HepG2 (cell line): ENCODE measurements at regions of chr7 and their contacts with region 1.

Region 1: DNA sequence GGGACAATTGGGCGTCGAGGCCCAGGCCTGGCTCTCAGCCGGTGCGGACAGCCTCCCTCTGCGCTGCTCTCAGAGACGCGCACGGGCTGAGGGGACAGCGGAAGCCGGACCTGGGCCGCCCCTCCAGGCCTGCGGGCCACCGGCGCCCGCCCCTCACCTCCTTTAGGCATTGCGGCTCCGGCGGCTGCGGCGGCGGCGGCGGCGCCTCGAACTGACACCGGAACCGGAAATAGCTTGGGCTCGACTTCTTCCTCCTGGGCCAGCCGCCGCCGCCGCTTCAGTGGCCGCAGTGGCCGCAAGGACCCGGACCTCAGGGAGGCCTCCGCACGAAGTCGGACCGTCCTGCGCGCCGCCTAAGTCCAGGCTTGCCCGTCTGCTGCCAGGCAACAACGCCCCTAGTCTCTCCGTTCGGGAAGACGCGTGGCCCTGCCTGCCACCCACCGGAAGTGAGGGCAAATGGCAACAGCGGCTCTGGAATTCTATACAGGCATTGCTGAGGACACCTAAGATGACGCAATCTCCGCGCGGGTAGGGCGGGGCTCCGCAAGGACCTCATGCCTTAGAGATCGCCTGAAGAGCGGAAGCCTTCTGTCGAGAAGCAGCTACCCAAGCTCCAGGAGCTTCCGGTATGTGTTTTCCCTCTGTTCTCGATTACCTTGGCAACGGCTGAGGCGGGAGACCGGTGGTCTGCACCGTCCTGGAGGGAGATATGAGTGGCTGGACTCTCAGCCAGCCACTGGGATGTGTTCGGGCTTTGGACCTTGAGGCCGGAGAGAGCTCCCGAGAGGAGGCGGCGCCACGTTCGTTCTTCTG is at the starts of genes BUD31 and PDAP1:
- DNase-seq: peak; percentile 91
- ATAC-seq: peak; percentile 90
- H3K4me3 ChIP-seq: peak within 1 kb of the TSS; percentile 80 to 100 (median 93)
- H3K27ac ChIP-seq: peak within 1 kb of the TSS; percentile 98
- H3K4me1 ChIP-seq: peaks cover 41% of the 10 kb centered on the region
- H3K27me3 ChIP-seq: peaks cover 0 to 4% of the 10 kb centered on the region in 2 experiments; a peak in 2 of 5 replicates
- CTCF ChIP-seq: peak; percentile 37
- EP300 ChIP-seq: peak; percentile 41 to 54; a peak in 1 of 4 replicates
- POLR2A ChIP-seq: peak; percentile 91 to 95
- RAD21 ChIP-seq: peak; percentile 54; the same call in 1 of the 2 replicates
- total RNA-seq, gene BUD31: 79.1 and 101 TPM in 2 replicates
- total RNA-seq, gene PDAP1: 95.1 and 100 TPM in 2 replicates

Region 2: GRCh38 chr7:99374103-99375064 is 34.2 kb before region 1 on chr7 and contains the start of gene ARPC1B:
- CTCF ChIA-PET with region 1: no interaction called
- POLR2A ChIA-PET with region 1: interaction called, 29 read pairs
- in situ Hi-C with region 1: no loop called
- intact Hi-C with region 1: loop called (anchors 5 kb)
- DNase-seq: peak; percentile 57
- ATAC-seq: peak; percentile 78
- H3K4me3 ChIP-seq: peak within 1 kb of the TSS; percentile 87 to 99 (median 95)
- H3K27ac ChIP-seq: peak within 1 kb of the TSS; percentile 91
- H3K4me1 ChIP-seq: peaks cover 46% of the 10 kb centered on the region
- H3K27me3 ChIP-seq: no peaks in the 10 kb centered on the region
- CTCF ChIP-seq: no peak
- EP300 ChIP-seq: no peak
- POLR2A ChIP-seq: peak; percentile 34 to 66; a peak in 3 of 4 replicates
- RAD21 ChIP-seq: peak; percentile 55
- total RNA-seq, gene ARPC1B: 89.1 and 92.2 TPM in 2 replicates

Region 3: DNA sequence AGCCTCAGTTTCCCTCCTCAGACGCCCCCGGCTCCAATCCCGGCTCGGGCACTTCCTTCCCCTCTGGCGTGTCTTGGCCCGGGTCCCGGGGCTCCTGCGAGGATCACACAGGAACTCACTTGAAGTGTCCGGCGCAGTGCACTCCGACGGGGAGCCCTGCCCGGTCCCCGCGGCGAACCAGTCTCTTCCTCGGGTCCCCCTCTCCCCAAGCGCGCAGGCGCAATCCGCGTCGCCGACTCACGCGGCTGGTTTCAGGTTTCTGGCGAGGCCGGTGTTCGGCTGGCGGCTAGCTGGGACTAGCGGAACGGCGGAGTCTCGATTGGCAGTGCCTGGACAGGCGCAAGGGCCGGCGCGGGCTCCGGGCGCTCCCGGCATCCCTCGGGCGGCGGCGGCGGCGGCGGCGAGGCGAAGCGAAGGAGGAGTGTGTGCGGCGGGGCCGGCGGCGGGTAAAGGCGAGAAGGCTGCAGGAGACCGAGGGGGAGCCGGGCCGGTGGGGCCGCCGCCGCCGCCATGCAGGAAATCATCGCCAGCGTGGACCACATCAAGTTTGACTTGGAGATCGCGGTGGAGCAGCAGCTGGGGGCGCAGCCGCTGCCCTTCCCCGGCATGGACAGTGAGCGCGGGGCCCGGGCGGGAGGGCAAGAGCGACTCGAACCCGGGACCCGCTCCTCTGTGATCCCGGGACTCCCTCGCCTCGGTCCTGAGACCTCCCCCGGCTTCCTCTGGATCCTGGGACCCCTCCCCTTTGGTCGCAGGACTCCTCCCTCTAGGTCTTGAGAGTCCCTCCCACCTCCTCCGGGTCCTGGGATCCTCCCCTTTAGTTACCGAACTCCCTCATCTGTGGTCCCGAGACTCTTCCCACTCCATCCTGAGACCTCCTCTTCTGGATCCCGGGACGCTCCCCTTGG is 30.2 kb after region 1 on chr7 and contains the starts of genes CPSF4 and PTCD1:
- CTCF ChIA-PET with region 1: no interaction called
- POLR2A ChIA-PET with region 1: interaction called, 16 read pairs
- in situ Hi-C with region 1: no loop called
- intact Hi-C with region 1: no loop called
- DNase-seq: peak; percentile 90
- ATAC-seq: peak; percentile 96
- H3K4me3 ChIP-seq: peak within 1 kb of the TSS; percentile 79 to 100 (median 100)
- H3K27ac ChIP-seq: peak within 1 kb of the TSS; percentile 79
- H3K4me1 ChIP-seq: peaks cover 28% of the 10 kb centered on the region
- H3K27me3 ChIP-seq: peaks cover 0 to 3% of the 10 kb centered on the region in 2 experiments; a peak in 1 of 5 replicates
- CTCF ChIP-seq: no peak; the same call in 1 of the 2 replicates
- EP300 ChIP-seq: no peak
- POLR2A ChIP-seq: peak; percentile 52 to 91; a peak in 3 of 4 replicates
- RAD21 ChIP-seq: no peak
- total RNA-seq, gene CPSF4: 44.4 and 49.6 TPM in 2 replicates
- total RNA-seq, gene PTCD1: 4.7 and 8.4 TPM in 2 replicates

Region 4: DNA sequence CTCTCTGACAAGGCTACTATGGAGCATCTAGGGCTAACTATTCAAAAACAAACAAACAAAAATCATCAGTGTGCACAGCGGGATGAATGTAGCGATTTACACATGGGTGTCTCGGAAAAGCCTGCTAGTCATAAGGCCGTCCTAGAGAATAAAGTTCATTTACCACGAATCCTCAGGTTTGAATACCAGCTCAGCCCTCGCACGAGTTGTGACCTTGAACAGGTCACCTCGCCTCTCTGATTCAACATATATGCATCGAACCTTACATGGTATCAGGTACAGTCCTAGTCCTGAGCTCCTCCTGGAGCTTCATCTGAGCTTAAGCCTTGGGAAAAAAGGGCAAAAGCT is 56.8 kb after region 1 on chr7:
- CTCF ChIA-PET with region 1: no interaction called
- POLR2A ChIA-PET with region 1: interaction called, 5 read pairs
- in situ Hi-C with region 1: no loop called
- intact Hi-C with region 1: loop called (anchors 2 kb)
- DNase-seq: peak; percentile 38
- ATAC-seq: peak; percentile 33
- H3K4me3 ChIP-seq: peak overlapping the region; percentile 80 to 94 (median 82)
- H3K27ac ChIP-seq: peak overlapping the region; percentile 89
- H3K4me1 ChIP-seq: peaks cover 56% of the 10 kb centered on the region
- H3K27me3 ChIP-seq: no peaks in the 10 kb centered on the region; a peak in 1 of 5 replicates
- CTCF ChIP-seq: no peak
- EP300 ChIP-seq: no peak
- POLR2A ChIP-seq: no peak
- RAD21 ChIP-seq: no peak